ENCODE measurements at regions of chr9 and their contacts with region 1.

Region 1: GRCh38 chr9:23290973-23291372 is 535.1 kb downstream of the ELAVL2 start:
- DNase-seq: no peak
- ATAC-seq: no peak
- H3K4me3 ChIP-seq: no peak overlapping the region
- H3K27ac ChIP-seq: no peak overlapping the region
- H3K4me1 ChIP-seq: no peaks in the 10 kb centered on the region
- H3K27me3 ChIP-seq: no peaks in the 10 kb centered on the region
- CTCF ChIP-seq: no peak

Region 2: DNA sequence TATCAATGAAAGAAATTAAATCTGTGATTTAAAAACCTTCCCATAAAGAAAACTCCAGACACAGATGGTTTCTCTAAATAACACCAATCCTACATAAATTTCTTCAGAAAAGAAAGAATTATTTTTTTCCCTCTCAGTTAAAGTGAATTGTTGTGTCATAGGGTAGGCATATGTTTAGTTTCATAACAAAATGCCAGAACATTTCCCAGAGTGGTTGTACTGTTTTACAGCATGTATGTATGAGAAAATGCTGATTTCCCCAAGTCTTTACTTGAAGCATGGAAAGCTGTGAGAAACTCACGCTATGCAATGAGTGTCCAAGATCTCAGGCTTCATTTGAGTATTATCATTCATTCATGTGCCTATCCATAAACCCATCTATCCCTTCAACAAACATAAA is 47.5 kb before region 1 on chr9:
- intact Hi-C with region 1: no loop called
- DNase-seq: no peak
- ATAC-seq: no peak
- H3K4me3 ChIP-seq: no peak overlapping the region
- H3K27ac ChIP-seq: no peak overlapping the region
- H3K4me1 ChIP-seq: no peaks in the 10 kb centered on the region
- H3K27me3 ChIP-seq: no peaks in the 10 kb centered on the region
- CTCF ChIP-seq: no peak

Region 3: DNA sequence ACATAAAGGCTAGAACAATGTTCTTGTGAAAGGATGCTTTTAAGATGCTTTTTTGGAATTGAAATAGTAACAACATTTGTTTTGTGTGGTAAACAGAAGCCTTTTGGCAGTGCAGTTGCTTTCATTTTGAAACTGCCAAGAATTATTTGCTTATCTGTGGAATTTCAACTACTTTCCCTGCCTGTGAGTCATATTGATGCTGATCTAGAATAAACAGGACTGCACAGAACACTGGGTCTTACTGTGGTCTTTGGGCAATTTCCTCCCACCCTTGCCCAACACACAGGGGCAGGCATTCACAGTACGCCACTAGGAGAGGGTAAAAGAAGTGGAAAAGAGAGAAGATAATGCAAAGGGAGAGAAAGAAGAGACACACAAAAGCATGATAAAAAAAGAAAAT is 51.3 kb after region 1 on chr9:
- intact Hi-C with region 1: loop called in 1 of 10 experiments (anchors 5 kb)
- DNase-seq: no peak
- ATAC-seq: no peak
- H3K4me3 ChIP-seq: no peak overlapping the region
- H3K27ac ChIP-seq: no peak overlapping the region
- H3K4me1 ChIP-seq: no peaks in the 10 kb centered on the region
- H3K27me3 ChIP-seq: no peaks in the 10 kb centered on the region
- CTCF ChIP-seq: no peak

Region 4: GRCh38 chr9:23394189-23394588 is 103.2 kb after region 1 on chr9:
- intact Hi-C with region 1: no loop called
- DNase-seq: no peak
- ATAC-seq: no peak
- H3K4me3 ChIP-seq: no peak overlapping the region
- H3K27ac ChIP-seq: no peak overlapping the region
- H3K4me1 ChIP-seq: no peaks in the 10 kb centered on the region
- H3K27me3 ChIP-seq: no peaks in the 10 kb centered on the region
- CTCF ChIP-seq: no peak

Measured in heart right ventricle (tissue), 16 donors.